CD8-positive, alpha-beta T cell (primary cell): ENCODE measurements at regions of chr16 and their contacts with region 1.

Region 1: DNA sequence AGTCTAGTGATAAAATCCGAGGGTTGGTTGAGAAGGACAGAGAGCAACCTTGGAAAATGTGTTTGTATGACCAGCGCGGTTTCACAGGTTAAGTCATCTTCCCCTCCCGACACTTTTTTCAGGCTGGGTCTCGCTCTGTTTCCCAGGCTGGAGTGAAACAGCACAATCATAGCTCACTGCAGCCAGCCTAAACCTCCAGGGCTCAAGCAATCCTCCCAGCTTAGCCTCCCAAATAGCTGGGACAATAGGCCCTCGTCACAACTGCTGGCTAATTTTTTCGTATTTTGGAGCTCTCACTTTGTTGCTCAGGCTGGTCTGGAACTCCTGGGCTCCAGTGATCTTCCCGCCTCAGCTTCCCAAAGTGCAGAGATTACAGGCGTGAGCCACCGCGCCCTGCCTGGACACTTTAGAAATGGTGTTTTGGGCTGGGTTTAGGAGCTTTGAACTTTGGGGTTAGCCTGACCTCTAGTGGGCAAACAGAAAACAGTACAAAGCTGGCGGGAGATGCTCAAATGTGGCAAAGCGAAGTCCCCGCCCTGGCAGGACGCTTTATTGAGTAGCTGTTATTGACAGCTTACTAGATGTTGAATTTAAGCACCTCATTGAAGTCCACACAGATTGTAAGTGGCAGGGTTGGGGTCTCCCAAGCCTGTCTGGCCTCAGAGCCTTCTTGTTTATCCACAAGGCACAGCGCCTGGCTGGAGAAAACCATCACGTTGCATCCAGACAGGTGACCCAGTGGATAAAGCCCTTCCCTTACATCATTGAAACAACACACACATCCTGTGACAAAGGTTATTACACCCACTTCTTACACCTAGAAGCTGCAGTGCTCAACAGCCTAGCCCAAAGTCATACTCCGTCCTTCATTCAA is 34.7 kb upstream of the RBBP6 start:
- DNase-seq: peak; percentile 17 to 77 (median 44)
- ATAC-seq: peak; percentile 71
- H3K4me3 ChIP-seq: no peak overlapping the region
- H3K4me3 Mint-ChIP-seq: no peak overlapping the region
- H3K27ac ChIP-seq: no peak overlapping the region
- H3K27ac Mint-ChIP-seq: no peak overlapping the region
- H3K4me1 ChIP-seq: no peaks in the 10 kb centered on the region
- H3K4me1 Mint-ChIP-seq: no peaks in the 10 kb centered on the region
- H3K27me3 ChIP-seq: peaks cover 0 to 2% of the 10 kb centered on the region in 2 experiments
- H3K27me3 Mint-ChIP-seq: peaks cover 25% of the 10 kb centered on the region
- CTCF ChIP-seq: peak; percentile 74

Region 2: GRCh38 chr16:24493859-24494258 is 10.8 kb before region 1 on chr16:
- CTCF ChIA-PET with region 1: interaction called, 10 read pairs
- POLR2A ChIA-PET with region 1: interaction called, 3 read pairs
- intact Hi-C with region 1: no loop called
- DNase-seq: no peak
- ATAC-seq: no peak
- H3K4me3 ChIP-seq: no peak overlapping the region
- H3K4me3 Mint-ChIP-seq: no peak overlapping the region
- H3K27ac ChIP-seq: no peak overlapping the region
- H3K27ac Mint-ChIP-seq: no peak overlapping the region
- H3K4me1 ChIP-seq: no peaks in the 10 kb centered on the region
- H3K4me1 Mint-ChIP-seq: no peaks in the 10 kb centered on the region
- H3K27me3 ChIP-seq: no peaks in the 10 kb centered on the region
- H3K27me3 Mint-ChIP-seq: peaks cover 16% of the 10 kb centered on the region
- CTCF ChIP-seq: no peak

Region 3: DNA sequence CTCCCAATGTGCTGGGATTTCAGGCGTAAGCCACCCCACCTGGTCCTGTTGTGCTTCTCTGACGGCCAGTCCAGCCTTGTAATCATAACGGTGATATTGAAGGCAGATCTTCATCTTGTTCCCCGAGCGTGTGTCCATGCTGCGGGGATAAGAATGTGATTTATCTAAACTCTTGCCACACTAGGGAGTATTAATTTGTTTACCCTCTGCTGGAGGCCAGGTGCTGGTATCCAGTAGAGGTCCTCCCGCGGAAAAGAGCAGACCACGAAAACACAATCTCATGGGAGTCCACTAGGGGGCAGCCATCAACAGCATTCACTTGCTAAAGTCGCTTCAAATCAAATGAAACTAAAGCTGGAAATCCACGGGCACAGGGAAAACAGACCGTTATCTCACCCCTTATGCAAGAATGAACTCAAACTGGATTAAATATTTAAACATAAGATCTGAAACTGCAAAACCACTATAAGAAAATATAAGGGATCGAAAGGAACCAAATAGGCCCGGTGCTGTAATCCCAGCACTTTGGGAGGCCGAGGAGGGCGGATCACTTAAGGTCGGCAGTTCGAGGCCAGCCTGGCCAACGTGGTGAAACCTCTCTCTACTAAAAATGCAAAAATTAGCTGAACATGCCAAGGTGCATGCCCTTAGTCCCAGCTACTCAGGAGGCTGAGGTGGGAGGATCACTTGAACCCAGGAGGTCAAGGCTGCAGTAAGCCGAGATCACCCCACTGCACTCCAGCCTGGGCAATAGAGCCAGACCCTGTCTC is 12.4 kb after region 1 on chr16:
- CTCF ChIA-PET with region 1: interaction called, 21 read pairs
- POLR2A ChIA-PET with region 1: no interaction called
- intact Hi-C with region 1: no loop called
- DNase-seq: peak; percentile 42 to 83 (median 77)
- ATAC-seq: peak; percentile 81
- H3K4me3 ChIP-seq: no peak overlapping the region
- H3K4me3 Mint-ChIP-seq: no peak overlapping the region
- H3K27ac ChIP-seq: no peak overlapping the region
- H3K27ac Mint-ChIP-seq: no peak overlapping the region
- H3K4me1 ChIP-seq: no peaks in the 10 kb centered on the region
- H3K4me1 Mint-ChIP-seq: peaks cover 4% of the 10 kb centered on the region
- H3K27me3 ChIP-seq: no peaks in the 10 kb centered on the region
- H3K27me3 Mint-ChIP-seq: peaks cover 6% of the 10 kb centered on the region
- CTCF ChIP-seq: peak; percentile 93

Region 4: GRCh38 chr16:24525970-24526559 is 21.4 kb after region 1 on chr16:
- CTCF ChIA-PET with region 1: interaction called, 11 read pairs
- POLR2A ChIA-PET with region 1: no interaction called
- intact Hi-C with region 1: no loop called
- DNase-seq: peak in 1 of 9 experiments; percentile 23
- ATAC-seq: no peak
- H3K4me3 ChIP-seq: no peak overlapping the region
- H3K4me3 Mint-ChIP-seq: no peak overlapping the region
- H3K27ac ChIP-seq: no peak overlapping the region
- H3K27ac Mint-ChIP-seq: no peak overlapping the region
- H3K4me1 ChIP-seq: no peaks in the 10 kb centered on the region
- H3K4me1 Mint-ChIP-seq: no peaks in the 10 kb centered on the region
- H3K27me3 ChIP-seq: peaks cover 0 to 2% of the 10 kb centered on the region in 2 experiments
- H3K27me3 Mint-ChIP-seq: peaks cover 3% of the 10 kb centered on the region
- CTCF ChIP-seq: no peak

Region 5: GRCh38 chr16:24800586-24800985 is 295.9 kb after region 1 on chr16:
- CTCF ChIA-PET with region 1: no interaction called
- POLR2A ChIA-PET with region 1: no interaction called
- intact Hi-C with region 1: no loop called
- DNase-seq: no peak
- ATAC-seq: no peak
- H3K4me3 ChIP-seq: no peak overlapping the region
- H3K4me3 Mint-ChIP-seq: no peak overlapping the region
- H3K27ac ChIP-seq: no peak overlapping the region
- H3K27ac Mint-ChIP-seq: no peak overlapping the region
- H3K4me1 ChIP-seq: no peaks in the 10 kb centered on the region
- H3K4me1 Mint-ChIP-seq: no peaks in the 10 kb centered on the region
- H3K27me3 ChIP-seq: no peaks in the 10 kb centered on the region
- H3K27me3 Mint-ChIP-seq: no peaks in the 10 kb centered on the region
- CTCF ChIP-seq: no peak